ENCODE measurements at regions of chr16 and their contacts with region 1.

Region 1: GRCh38 chr16:29665294-29666077 is 2.4 kb downstream of the SPN start:
- DNase-seq: no peak
- ATAC-seq: no peak
- H3K4me3 Mint-ChIP-seq: no peak overlapping the region
- H3K27ac Mint-ChIP-seq: no peak overlapping the region; the same call in 1 of the 2 replicates
- H3K4me1 Mint-ChIP-seq: peaks cover 48% of the 10 kb centered on the region
- H3K27me3 Mint-ChIP-seq: no peaks in the 10 kb centered on the region
- CTCF ChIP-seq: no peak

Region 2: DNA sequence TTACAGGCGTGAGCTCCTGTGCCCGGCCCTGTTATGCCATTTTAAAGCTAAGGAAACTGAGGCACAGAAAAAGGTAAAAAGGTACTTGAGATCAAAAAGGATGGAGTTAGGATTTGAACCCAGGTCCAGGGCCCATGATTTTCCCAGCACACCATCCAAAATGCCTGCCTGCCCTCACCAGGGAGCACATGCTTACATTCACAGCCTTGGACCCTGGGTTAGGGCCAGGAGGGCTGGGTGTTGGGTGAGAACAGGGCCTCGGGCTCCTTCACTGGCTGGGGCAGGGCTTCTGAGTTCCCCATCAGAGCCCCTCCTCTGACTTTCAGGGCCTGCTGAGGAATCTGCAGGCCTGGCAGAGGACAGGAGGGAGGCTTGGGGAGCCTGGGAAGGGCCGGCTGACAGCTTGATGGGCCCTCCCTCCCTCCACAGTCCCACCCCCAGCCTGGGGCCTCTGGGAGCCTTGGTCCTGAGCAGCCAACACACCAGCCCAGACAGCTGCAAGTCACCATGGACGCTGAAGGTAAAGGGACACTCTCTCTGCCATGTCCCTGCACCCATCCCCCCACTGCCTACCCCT is 13.3 kb after region 1 on chr16 and contains the start of gene QPRT:
- CTCF ChIA-PET with region 1: interaction called, 6 read pairs
- POLR2A ChIA-PET with region 1: interaction called, 14 read pairs
- DNase-seq: peak; percentile 90
- ATAC-seq: peak; percentile 85
- H3K4me3 Mint-ChIP-seq: peak within 1 kb of the TSS; percentile 91
- H3K27ac Mint-ChIP-seq: peak within 1 kb of the TSS; percentile 100
- H3K4me1 Mint-ChIP-seq: peaks cover 40% of the 10 kb centered on the region
- H3K27me3 Mint-ChIP-seq: no peaks in the 10 kb centered on the region
- CTCF ChIP-seq: no peak
- total RNA-seq, gene QPRT: 138 to 187 TPM (median 182 TPM) in 3 replicates

Region 3: DNA sequence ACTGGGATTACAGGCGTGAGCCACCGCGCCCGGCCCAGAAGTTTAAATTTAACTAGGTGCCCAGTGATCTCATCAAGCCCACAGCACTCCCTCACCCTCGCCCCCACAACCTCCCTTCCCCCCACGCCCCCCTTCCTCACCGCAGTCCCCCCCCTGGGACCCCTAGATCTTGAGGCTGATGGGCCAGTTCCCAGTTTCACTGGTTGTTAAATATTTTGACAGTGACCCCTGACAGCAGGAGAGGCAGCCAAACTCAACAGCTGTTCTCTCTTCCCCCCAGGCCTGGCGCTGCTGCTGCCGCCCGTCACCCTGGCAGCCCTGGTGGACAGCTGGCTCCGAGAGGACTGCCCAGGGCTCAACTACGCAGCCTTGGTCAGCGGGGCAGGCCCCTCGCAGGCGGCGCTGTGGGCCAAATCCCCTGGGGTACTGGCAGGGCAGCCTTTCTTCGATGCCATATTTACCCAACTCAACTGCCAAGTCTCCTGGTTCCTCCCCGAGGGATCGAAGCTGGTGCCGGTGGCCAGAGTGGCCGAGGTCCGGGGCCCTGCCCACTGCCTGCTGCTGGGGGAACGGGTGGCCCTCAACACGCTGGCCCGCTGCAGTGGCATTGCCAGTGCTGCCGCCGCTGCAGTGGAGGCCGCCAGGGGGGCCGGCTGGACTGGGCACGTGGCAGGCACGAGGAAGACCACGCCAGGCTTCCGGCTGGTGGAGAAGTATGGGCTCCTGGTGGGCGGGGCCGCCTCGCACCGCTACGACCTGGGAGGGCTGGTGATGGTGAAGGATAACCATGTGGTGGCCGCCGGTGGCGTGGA is 29.1 kb after region 1 on chr16:
- CTCF ChIA-PET with region 1: interaction called, 11 read pairs
- POLR2A ChIA-PET with region 1: no interaction called
- DNase-seq: no peak
- ATAC-seq: no peak
- H3K4me3 Mint-ChIP-seq: no peak overlapping the region
- H3K27ac Mint-ChIP-seq: no peak overlapping the region
- H3K4me1 Mint-ChIP-seq: peaks cover 17% of the 10 kb centered on the region
- H3K27me3 Mint-ChIP-seq: no peaks in the 10 kb centered on the region
- CTCF ChIP-seq: no peak